ENCODE measurements at regions of chr13 and their contacts with region 1.

Region 1: GRCh38 chr13:26707122-26708006 is 53.2 kb downstream of the GPR12 start:
- DNase-seq: peak; percentile 78
- H3K4me3 ChIP-seq: no peak overlapping the region
- H3K27ac ChIP-seq: no peak overlapping the region
- H3K4me1 ChIP-seq: no peaks in the 10 kb centered on the region
- H3K27me3 ChIP-seq: peaks cover 0 to 12% (median 0%) of the 10 kb centered on the region in 4 donors
- CTCF ChIP-seq: peak in 1 of 3 experiments; percentile 53
- EP300 ChIP-seq: no peak
- POLR2A ChIP-seq: no peak

Region 2: GRCh38 chr13:26872525-26873385 is 165.4 kb after region 1 on chr13:
- intact Hi-C with region 1: loop called (anchors 5 kb)
- DNase-seq: no peak
- H3K4me3 ChIP-seq: no peak overlapping the region
- H3K27ac ChIP-seq: no peak overlapping the region
- H3K4me1 ChIP-seq: no peaks in the 10 kb centered on the region
- H3K27me3 ChIP-seq: peaks cover 0 to 48% (median 3%) of the 10 kb centered on the region in 4 donors
- CTCF ChIP-seq: peak; percentile 22 to 49 (median 30)
- EP300 ChIP-seq: no peak
- POLR2A ChIP-seq: no peak

Region 3: DNA sequence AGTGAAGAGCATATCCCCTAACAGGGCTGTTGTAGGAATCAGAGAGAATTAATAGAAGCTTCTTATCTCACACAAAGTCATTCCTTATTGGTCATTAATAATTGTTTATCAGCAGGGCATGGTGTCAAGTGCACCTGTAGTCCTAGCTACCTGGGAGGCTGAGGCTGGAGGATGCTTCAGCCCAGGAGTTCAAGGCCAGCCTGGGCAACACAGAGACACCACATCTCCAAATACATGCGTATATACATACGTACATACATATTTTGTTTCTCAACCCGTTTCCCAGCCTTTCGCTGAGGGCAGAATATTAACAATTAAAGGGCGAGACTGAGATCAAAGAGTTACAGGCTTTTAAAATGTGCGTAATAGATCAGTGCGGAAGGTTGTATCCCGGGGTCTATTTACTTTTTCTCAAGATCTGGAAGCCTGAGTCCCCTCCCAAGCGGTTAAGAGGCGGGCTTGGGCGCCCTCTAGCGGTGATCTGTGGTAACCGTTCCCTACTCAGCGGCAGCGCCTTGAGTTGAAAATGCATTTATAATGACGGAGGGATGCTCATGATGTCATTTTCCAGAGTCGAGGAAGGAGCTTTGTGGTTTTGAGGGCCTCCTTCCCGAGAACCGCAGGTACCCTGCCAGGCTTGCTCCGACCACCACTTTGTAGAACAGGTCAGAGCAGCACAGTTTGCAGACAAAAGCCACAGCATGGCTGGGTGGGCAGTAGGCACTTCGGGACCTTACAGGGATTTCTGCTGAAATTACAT is 222.8 kb after region 1 on chr13:
- intact Hi-C with region 1: loop called (anchors 5 kb)
- DNase-seq: no peak
- H3K4me3 ChIP-seq: no peak overlapping the region
- H3K27ac ChIP-seq: no peak overlapping the region
- H3K4me1 ChIP-seq: peaks cover 0 to 8% (median 3%) of the 10 kb centered on the region in 4 donors
- H3K27me3 ChIP-seq: no peaks in the 10 kb centered on the region
- CTCF ChIP-seq: peak; percentile 81 to 98 (median 94)
- EP300 ChIP-seq: no peak
- POLR2A ChIP-seq: no peak